A549 (cell line): ENCODE measurements at regions of chr17 and their contacts with region 1.

Region 1: GRCh38 chr17:41538565-41538991 is 10.5 kb upstream of the KRT19 start:
- DNase-seq: no peak
- ATAC-seq: no peak
- H3K4me3 ChIP-seq: no peak overlapping the region
- H3K27ac ChIP-seq: peak overlapping the region in 1 of 2 experiments; percentile 40; a peak in 3 of 6 replicates
- H3K4me1 ChIP-seq: peaks cover 16% of the 10 kb centered on the region; the same call in 2 of the 3 replicates
- CTCF ChIP-seq: no peak
- EP300 ChIP-seq: no peak
- POLR2A ChIP-seq: no peak
- RAD21 ChIP-seq: no peak

Region 2: DNA sequence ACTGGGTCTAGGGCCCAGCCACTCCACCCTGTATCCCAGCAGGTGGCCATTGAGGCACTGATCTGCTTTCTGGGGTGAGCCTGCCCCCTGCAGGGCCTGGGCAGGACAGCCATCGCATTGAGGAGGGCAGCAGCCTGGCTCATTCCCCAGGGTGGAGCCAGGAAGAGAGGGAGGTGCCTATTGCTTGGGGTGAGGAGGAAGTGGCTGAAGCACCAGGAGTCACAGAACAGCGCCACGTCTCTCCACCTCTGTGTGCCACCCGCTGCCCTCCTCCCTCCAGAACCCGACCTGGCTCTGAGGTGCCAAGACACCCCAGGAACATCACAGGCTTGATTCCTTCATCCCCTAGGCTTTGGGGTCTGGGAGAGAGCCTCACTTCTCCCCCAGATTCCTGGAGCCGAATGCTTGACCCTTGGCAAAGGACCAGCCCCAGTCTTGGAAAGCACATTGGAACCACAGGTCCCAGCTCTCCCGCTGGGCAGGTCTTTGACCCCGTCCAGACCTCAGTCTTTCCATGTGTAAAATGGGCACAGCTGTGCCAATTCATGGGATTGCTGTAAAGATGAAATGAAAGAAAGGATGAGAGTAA is 41.7 kb before region 1 on chr17:
- CTCF ChIA-PET with region 1: interaction called, 15 read pairs
- POLR2A ChIA-PET with region 1: no interaction called
- DNase-seq: peak; percentile 91 to 95
- ATAC-seq: peak; percentile 91 to 99
- H3K4me3 ChIP-seq: no peak overlapping the region
- H3K27ac ChIP-seq: peak overlapping the region; percentile 76 to 88
- H3K4me1 ChIP-seq: peaks cover 27% of the 10 kb centered on the region
- CTCF ChIP-seq: peak; percentile 80
- EP300 ChIP-seq: no peak
- POLR2A ChIP-seq: peak; percentile 43
- RAD21 ChIP-seq: peak; percentile 89 to 92